Mammary epithelial cell (primary cell): ENCODE measurements at regions of chr5 and their contacts with region 1.

Region 1: DNA sequence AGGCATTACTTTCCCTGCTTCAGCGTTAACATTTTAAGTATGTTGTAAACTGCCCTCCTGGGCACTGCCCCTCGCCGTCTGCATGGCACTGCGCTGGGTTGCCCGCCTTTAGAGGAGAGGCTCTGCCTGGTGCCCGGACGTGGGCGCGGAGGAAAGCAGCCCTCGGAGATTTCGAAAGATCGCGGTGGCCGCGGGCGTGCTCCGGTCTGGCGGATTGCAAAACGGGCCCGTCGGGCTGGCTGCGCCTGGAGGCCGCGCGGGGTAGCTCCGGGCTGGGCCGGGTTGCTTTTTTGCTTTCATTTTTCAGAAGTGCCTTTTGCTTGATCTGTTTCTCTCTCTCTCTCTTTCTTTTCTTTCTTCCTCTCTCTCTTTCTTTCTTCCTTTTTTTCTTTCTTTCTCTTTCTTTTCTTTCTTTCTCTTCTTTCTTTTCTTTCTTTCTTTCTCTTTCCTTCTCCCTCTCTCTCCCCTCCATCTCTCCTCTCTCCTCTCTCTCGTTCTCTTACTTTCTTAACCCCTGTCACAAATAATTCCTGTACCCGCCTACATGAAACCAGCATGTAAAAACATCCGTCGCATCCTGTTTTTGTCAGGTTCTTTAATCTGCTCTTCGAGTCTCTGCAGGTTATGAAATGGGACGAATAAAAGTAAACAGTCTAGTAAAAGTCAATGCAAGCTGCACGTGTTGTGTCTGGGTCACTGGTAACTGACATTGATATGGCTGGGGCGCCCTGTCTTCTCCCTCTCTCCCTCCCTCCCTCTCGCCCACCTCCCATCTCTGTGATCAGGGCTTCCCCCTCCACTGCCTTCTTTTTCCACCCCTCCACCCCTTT is 1.7 kb downstream of the FST start:
- DNase-seq: peak; percentile 78
- H3K4me3 ChIP-seq: peak overlapping the region; percentile 85 to 97 (median 96)
- H3K27ac ChIP-seq: peak overlapping the region; percentile 98
- H3K4me1 ChIP-seq: peaks cover 27% of the 10 kb centered on the region
- H3K27me3 ChIP-seq: no peaks in the 10 kb centered on the region
- CTCF ChIP-seq: no peak

Region 2: GRCh38 chr5:53123702-53124101 is 358.4 kb before region 1 on chr5:
- CTCF ChIA-PET with region 1: no interaction called
- dilution Hi-C with region 1: no loop called
- in situ Hi-C with region 1: no loop called
- intact Hi-C with region 1: loop called (anchors 2 kb)
- DNase-seq: no peak
- H3K4me3 ChIP-seq: no peak overlapping the region
- H3K27ac ChIP-seq: no peak overlapping the region
- H3K4me1 ChIP-seq: peaks cover 12% of the 10 kb centered on the region
- H3K27me3 ChIP-seq: no peaks in the 10 kb centered on the region
- CTCF ChIP-seq: peak in 1 of 2 donors; percentile 20

Region 3: DNA sequence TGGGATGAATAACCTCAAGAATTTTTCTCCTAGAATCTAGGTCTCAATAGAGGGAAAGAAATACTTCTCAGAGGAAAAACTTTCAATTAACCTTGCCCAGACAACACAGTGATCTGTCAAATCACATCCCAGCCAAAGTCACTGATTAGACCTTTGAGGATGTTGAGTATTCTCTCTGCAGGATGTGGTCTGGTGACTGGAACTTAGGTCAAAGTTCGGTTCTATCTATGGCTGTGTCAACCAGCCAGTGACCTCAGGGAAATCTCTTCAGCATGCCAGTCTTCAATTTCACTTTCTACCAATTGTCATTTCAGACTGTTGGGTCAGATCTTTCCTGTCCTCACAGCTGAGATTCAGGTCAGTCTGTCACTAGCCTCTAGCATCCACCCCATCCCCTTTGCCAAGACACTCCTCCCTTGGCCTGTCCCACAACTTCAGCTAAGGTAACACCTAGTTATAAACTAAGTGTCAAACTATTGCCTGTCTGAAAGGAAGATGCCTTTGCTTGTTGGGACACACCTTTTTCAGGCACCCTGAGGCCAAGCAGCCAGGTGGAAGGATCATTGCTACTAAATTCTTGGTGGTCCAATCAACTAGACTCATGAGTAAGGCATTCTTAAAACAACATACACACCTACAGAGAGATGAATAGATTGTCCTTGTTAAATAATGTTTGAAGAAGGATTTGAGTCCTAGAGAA is 158.0 kb before region 1 on chr5:
- CTCF ChIA-PET with region 1: no interaction called
- dilution Hi-C with region 1: no loop called
- in situ Hi-C with region 1: no loop called
- intact Hi-C with region 1: loop called (anchors 2 kb)
- DNase-seq: peak; percentile 99
- H3K4me3 ChIP-seq: no peak overlapping the region
- H3K27ac ChIP-seq: peak overlapping the region; percentile 99
- H3K4me1 ChIP-seq: peaks cover 78% of the 10 kb centered on the region
- H3K27me3 ChIP-seq: no peaks in the 10 kb centered on the region
- CTCF ChIP-seq: no peak

Region 4: GRCh38 chr5:53438486-53439472 is 43.3 kb before region 1 on chr5:
- CTCF ChIA-PET with region 1: no interaction called
- dilution Hi-C with region 1: no loop called
- in situ Hi-C with region 1: no loop called
- intact Hi-C with region 1: loop called (anchors 2 kb)
- DNase-seq: peak; percentile 64
- H3K4me3 ChIP-seq: no peak overlapping the region
- H3K27ac ChIP-seq: peak overlapping the region; percentile 24
- H3K4me1 ChIP-seq: peaks cover 17% of the 10 kb centered on the region
- H3K27me3 ChIP-seq: no peaks in the 10 kb centered on the region
- CTCF ChIP-seq: peak in 1 of 2 donors; percentile 13

Region 5: DNA sequence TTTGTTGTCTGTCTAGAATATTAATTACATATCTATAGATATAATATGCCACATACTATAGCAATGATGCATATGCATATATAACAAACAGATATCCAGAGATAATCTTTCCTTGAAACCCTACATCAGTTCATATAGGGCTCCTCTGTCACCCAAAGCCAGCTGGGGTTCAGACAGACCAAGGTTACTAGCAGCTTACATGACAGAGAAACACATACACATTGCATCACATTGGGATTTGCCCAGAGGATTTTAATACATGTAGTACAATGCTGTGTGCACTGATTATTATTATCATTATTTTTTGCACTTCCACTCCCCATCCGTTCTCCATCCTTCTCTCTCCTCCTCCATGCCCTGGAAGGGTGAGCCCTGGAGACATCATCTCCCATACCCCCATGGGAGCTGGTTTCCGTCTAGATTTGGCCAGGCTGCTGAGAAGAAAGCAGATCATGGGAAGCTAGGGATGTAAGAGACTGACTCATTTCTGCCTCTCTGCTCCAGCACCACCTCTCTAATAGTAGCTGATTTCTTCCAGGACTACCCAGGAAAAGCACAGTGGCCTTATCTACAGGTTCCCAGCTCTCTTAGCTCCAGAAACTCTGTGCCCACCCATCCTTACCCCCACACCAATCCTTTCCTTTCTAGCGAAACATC is 21.6 kb after region 1 on chr5:
- CTCF ChIA-PET with region 1: no interaction called
- dilution Hi-C with region 1: no loop called
- in situ Hi-C with region 1: no loop called
- intact Hi-C with region 1: no loop called
- DNase-seq: no peak
- H3K4me3 ChIP-seq: no peak overlapping the region
- H3K27ac ChIP-seq: no peak overlapping the region
- H3K4me1 ChIP-seq: no peaks in the 10 kb centered on the region
- H3K27me3 ChIP-seq: no peaks in the 10 kb centered on the region
- CTCF ChIP-seq: no peak

Region 6: DNA sequence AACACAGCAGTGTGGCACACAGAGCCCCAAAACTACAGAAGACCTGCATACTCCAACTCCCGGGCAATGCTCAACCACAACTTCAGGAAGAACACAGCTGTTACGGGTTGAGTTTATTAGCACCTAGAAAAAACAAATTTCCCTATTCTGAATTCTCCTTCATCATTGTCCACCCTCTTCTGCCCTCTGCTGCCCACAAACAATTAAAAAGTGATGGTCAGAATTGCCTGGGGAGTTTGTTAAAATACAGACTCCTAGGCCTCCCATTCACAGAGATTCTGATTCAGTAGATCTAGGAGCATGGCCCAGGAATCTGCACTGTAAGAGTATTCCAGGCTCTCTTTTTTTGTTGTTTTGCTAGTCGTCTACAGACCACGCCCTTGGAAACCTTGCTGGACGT is 388.9 kb after region 1 on chr5:
- CTCF ChIA-PET with region 1: interaction called, 5 read pairs
- dilution Hi-C with region 1: no loop called
- in situ Hi-C with region 1: no loop called
- intact Hi-C with region 1: loop called (anchors 2 kb)
- DNase-seq: peak; percentile 3
- H3K4me3 ChIP-seq: no peak overlapping the region
- H3K27ac ChIP-seq: no peak overlapping the region
- H3K4me1 ChIP-seq: no peaks in the 10 kb centered on the region
- H3K27me3 ChIP-seq: no peaks in the 10 kb centered on the region
- CTCF ChIP-seq: peak in 1 of 2 donors; percentile 14

Region 7: GRCh38 chr5:54159153-54159892 is 677.2 kb after region 1 on chr5:
- CTCF ChIA-PET with region 1: interaction called, 3 read pairs
- dilution Hi-C with region 1: no loop called
- in situ Hi-C with region 1: no loop called
- intact Hi-C with region 1: loop called (anchors 1 kb)
- DNase-seq: peak; percentile 10
- H3K4me3 ChIP-seq: no peak overlapping the region
- H3K27ac ChIP-seq: no peak overlapping the region
- H3K4me1 ChIP-seq: no peaks in the 10 kb centered on the region
- H3K27me3 ChIP-seq: no peaks in the 10 kb centered on the region
- CTCF ChIP-seq: peak; percentile 2 to 32

Region 8: DNA sequence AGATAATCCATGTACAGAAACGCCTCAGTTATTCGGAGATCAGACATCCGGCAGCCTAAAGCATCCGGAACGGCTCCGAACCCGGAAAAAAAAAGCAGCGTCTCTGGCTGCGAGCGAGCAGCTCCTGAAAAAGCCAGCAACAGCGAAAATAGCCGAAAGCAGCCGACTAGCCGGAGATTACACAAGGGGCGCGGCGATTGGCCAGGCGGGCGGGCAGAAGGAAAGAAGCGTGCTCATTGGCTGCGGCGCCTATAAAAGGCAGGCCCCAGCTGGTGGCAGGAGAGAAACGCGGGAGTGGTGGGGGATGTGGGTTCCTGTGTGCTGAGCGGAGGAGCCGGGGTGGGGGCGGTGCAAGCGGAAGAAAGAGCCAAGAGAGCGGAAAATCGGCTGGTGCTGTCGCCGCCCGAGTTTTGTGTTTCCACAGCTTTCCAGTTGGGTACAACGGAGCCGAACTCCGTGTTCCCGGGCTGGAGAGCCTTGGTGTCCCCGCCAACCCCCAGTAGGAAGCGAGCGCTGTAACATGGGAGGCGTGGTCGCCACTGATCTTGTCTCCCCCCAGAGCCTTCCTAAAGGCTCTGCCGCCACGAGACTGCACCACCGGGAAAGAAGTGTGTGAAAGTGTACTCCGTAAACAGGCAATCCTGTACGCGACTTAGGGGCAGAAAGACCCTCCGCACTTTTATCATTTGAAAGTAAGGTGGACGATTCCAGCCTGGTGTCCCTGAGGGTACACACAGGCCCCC is 828.5 kb after region 1 on chr5 and contains the start of gene ARL15:
- CTCF ChIA-PET with region 1: no interaction called
- dilution Hi-C with region 1: no loop called
- in situ Hi-C with region 1: no loop called
- intact Hi-C with region 1: loop called (anchors 2 kb)
- DNase-seq: peak; percentile 97
- H3K4me3 ChIP-seq: peak within 1 kb of the TSS; percentile 75 to 91 (median 79)
- H3K27ac ChIP-seq: peak within 1 kb of the TSS; percentile 79
- H3K4me1 ChIP-seq: peaks cover 12% of the 10 kb centered on the region
- H3K27me3 ChIP-seq: no peaks in the 10 kb centered on the region
- CTCF ChIP-seq: peak in 1 of 2 donors; percentile 1
- total RNA-seq, gene ARL15: 31.5 to 40.0 TPM

Region 9: GRCh38 chr5:54990841-54991258 is 1508.7 kb after region 1 on chr5:
- CTCF ChIA-PET with region 1: no interaction called
- dilution Hi-C with region 1: no loop called
- in situ Hi-C with region 1: no loop called
- intact Hi-C with region 1: no loop called
- DNase-seq: peak; percentile 62
- H3K4me3 ChIP-seq: no peak overlapping the region
- H3K27ac ChIP-seq: no peak overlapping the region
- H3K4me1 ChIP-seq: peaks cover 3% of the 10 kb centered on the region
- H3K27me3 ChIP-seq: no peaks in the 10 kb centered on the region
- CTCF ChIP-seq: no peak